ENCODE measurements at regions of chr5 and their contacts with region 1.

Region 1: GRCh38 chr5:59587489-59588337 is 305.8 kb downstream of the PDE4D start:
- DNase-seq: no peak
- H3K4me3 ChIP-seq: no peak overlapping the region
- H3K27ac ChIP-seq: no peak overlapping the region
- H3K4me1 ChIP-seq: peaks cover 20% of the 10 kb centered on the region
- H3K27me3 ChIP-seq: no peaks in the 10 kb centered on the region
- CTCF ChIP-seq: no peak

Region 2: DNA sequence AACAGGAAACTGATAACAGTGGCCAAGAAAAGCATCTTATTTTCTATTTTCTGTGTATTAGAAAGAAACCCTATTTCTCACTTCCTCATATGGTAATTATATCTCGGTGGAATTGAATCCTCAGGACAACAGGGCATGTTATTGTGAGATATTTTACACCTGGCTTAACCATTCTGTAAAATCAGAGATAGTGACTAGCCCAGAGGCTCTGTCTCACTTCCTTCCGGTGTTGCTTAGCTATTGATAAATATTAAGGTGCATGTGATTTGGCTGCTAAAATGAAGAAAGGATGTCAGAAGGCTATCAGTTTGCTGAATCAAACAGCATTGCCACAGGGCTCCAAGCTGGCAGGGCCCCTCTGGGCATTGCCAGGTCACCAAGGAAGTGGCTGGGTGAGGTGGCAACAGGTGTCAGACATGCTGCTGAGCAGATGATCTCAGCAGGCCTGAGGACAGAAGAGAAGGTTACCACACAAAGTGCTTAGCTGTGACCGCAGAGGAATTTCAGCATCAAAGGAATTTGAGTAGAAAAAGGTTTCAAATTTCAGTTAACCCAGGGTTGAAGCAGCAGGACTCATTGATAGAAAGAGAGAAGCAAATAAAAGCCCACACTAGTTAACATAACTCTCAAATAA is 24.8 kb before region 1 on chr5:
- CTCF ChIA-PET with region 1: no interaction called
- dilution Hi-C with region 1: no loop called
- in situ Hi-C with region 1: no loop called
- intact Hi-C with region 1: no loop called
- DNase-seq: peak; percentile 46
- H3K4me3 ChIP-seq: no peak overlapping the region
- H3K27ac ChIP-seq: no peak overlapping the region
- H3K4me1 ChIP-seq: peaks cover 13% of the 10 kb centered on the region
- H3K27me3 ChIP-seq: no peaks in the 10 kb centered on the region
- CTCF ChIP-seq: no peak

Region 3: GRCh38 chr5:59600998-59601397 is 13.3 kb after region 1 on chr5:
- CTCF ChIA-PET with region 1: interaction called, 14 read pairs
- dilution Hi-C with region 1: no loop called
- in situ Hi-C with region 1: no loop called
- intact Hi-C with region 1: no loop called
- DNase-seq: no peak
- H3K4me3 ChIP-seq: no peak overlapping the region
- H3K27ac ChIP-seq: no peak overlapping the region
- H3K4me1 ChIP-seq: peaks cover 13% of the 10 kb centered on the region
- H3K27me3 ChIP-seq: no peaks in the 10 kb centered on the region
- CTCF ChIP-seq: no peak

Region 4: GRCh38 chr5:60989790-60990189 is 1402.1 kb after region 1 on chr5:
- CTCF ChIA-PET with region 1: no interaction called
- dilution Hi-C with region 1: no loop called
- in situ Hi-C with region 1: no loop called
- intact Hi-C with region 1: no loop called
- DNase-seq: no peak
- H3K4me3 ChIP-seq: no peak overlapping the region
- H3K27ac ChIP-seq: no peak overlapping the region
- H3K4me1 ChIP-seq: no peaks in the 10 kb centered on the region
- H3K27me3 ChIP-seq: no peaks in the 10 kb centered on the region
- CTCF ChIP-seq: no peak

Measured in mammary epithelial cell (primary cell).